ENCODE measurements at regions of chr6 and their contacts with region 1.

Region 1: DNA sequence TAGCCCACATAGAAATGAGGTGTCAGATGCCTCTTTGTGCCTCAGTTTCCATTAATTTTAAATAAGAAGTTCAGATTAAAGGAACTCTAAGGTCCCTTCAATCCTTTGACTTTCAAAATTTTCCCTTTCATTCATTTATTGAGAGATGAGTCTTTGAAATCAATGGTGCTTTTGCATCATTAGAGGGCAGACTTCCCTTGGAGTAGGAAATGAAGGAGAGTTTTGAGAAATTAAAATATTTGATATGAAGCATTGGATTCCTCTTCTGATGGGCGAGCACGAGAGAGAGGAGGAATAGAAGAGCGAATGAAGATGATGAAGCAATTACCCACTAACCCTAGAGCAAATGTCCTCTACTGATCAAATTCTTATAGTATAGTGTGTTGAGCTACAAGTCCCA is 105.7 kb downstream of the EDN1 start:
- DNase-seq: peak; percentile 52
- H3K4me3 ChIP-seq: no peak overlapping the region
- H3K27ac ChIP-seq: no peak overlapping the region
- H3K4me1 ChIP-seq: no peaks in the 10 kb centered on the region
- H3K27me3 ChIP-seq: no peaks in the 10 kb centered on the region

Region 2: DNA sequence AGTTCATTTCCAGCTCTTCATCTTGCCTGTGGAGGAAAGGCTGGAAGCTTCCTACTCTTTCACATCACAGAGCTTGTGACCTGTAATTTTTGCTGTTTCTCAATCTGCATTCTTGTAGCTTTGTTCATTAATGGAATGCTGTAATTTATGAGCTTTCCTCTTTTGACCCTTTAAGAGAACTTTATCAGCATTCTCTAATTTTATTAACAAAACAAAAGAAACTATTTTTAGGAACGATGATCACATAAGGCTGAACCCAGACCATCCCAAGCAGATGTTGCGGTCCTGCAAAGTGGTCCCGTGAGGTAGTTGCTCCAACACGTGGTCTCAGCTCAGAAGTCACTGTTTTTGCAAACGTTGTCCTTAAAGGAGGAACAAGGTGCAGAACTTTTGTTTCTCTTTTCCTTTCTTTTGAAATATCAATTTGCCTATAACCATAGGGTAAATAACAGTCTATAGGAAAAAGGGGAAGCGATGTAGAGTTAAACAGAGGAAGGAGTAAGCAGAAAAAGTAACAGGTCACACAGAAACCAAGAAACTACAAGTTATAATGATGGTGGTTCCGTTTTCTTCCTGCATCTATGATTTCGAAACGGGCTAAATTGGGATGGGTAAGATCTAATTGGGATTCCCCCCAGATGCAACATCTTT is 199.4 kb after region 1 on chr6:
- in situ Hi-C with region 1: loop called (anchors 10 kb)
- DNase-seq: peak; percentile 35
- H3K4me3 ChIP-seq: no peak overlapping the region
- H3K27ac ChIP-seq: no peak overlapping the region
- H3K4me1 ChIP-seq: peaks cover 13% of the 10 kb centered on the region
- H3K27me3 ChIP-seq: no peaks in the 10 kb centered on the region

Measured in GM23248 (cell line).